PC-9 (cell line): ENCODE measurements at regions of chr1 and their contacts with region 1.

Region 1: DNA sequence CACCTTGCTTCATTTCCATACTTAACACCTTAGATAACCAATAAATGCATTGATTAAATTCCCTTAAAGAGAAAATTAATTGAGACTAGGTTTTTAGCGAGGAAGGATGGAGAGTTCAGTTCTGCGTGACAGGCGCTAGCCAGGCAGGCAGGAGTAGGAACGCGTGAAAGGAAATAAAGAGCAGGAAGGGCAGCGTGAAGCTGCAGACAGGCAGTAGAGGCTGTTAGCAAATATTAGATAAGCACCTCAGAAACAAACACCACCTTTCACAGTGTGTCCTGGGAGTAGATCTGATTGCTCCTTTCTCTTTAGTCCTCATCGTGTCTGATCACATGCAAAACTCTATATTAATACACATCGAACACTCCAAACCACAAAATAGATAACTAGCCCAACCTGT is 282.7 kb upstream of the ADGRL2 start:
- DNase-seq: no peak
- H3K4me3 ChIP-seq: no peak overlapping the region
- H3K27ac ChIP-seq: no peak overlapping the region
- H3K4me1 ChIP-seq: no peaks in the 10 kb centered on the region
- H3K27me3 ChIP-seq: no peaks in the 10 kb centered on the region
- CTCF ChIP-seq: no peak

Region 2: DNA sequence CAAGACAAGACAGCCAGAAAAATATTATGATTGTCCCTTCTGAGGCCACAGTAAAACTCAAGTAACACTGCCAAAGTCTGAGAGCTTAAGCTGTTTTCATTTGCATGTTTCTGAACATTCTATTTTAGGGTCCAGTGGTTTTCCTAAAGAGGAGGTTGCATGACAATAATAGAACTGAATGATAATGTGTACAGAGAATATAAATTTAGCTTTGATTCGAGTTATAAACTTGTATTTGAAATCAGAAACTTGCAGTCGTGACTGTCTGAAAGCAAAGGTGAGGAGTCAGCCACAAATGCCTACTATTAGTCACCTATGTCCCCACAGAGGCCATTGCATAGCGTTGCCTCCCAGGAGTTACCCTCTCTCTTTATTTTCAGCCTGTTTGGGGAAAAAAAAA is 80.3 kb before region 1 on chr1:
- CTCF ChIA-PET with region 1: no interaction called
- POLR2A ChIA-PET with region 1: no interaction called
- intact Hi-C with region 1: loop called (anchors 5 kb)
- DNase-seq: no peak
- H3K4me3 ChIP-seq: no peak overlapping the region
- H3K27ac ChIP-seq: no peak overlapping the region
- H3K4me1 ChIP-seq: no peaks in the 10 kb centered on the region
- H3K27me3 ChIP-seq: no peaks in the 10 kb centered on the region
- CTCF ChIP-seq: no peak

Region 3: DNA sequence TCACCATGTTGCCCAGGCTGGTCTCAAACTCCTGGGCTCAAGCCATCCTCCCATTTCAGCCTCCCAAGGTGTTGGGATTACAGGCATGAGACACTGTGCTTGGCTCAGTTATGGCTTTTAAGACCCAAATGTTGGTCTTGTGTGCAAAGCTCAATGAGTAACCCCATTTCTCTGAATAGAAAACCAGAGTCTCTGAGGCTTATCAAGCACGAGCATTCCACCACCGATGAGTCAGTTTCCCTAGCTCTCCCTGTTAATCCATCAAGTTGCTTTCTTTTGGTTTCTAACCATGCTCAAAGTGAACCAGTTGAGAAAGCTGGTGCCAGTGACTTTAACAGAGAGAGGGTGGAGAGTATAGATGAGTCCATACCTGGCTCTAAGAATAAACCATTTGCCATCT is 68.2 kb before region 1 on chr1:
- CTCF ChIA-PET with region 1: no interaction called
- POLR2A ChIA-PET with region 1: no interaction called
- intact Hi-C with region 1: no loop called
- DNase-seq: no peak
- H3K4me3 ChIP-seq: no peak overlapping the region
- H3K27ac ChIP-seq: no peak overlapping the region
- H3K4me1 ChIP-seq: no peaks in the 10 kb centered on the region
- H3K27me3 ChIP-seq: no peaks in the 10 kb centered on the region
- CTCF ChIP-seq: no peak

Region 4: GRCh38 chr1:82048596-82048995 is 530.6 kb after region 1 on chr1:
- CTCF ChIA-PET with region 1: no interaction called
- POLR2A ChIA-PET with region 1: no interaction called
- intact Hi-C with region 1: no loop called
- DNase-seq: no peak
- H3K4me3 ChIP-seq: no peak overlapping the region
- H3K27ac ChIP-seq: no peak overlapping the region
- H3K4me1 ChIP-seq: no peaks in the 10 kb centered on the region
- H3K27me3 ChIP-seq: no peaks in the 10 kb centered on the region
- CTCF ChIP-seq: no peak